Gastrocnemius medialis (tissue), 4 donors: ENCODE measurements at regions of chr19 and their contacts with region 1.

Region 1: DNA sequence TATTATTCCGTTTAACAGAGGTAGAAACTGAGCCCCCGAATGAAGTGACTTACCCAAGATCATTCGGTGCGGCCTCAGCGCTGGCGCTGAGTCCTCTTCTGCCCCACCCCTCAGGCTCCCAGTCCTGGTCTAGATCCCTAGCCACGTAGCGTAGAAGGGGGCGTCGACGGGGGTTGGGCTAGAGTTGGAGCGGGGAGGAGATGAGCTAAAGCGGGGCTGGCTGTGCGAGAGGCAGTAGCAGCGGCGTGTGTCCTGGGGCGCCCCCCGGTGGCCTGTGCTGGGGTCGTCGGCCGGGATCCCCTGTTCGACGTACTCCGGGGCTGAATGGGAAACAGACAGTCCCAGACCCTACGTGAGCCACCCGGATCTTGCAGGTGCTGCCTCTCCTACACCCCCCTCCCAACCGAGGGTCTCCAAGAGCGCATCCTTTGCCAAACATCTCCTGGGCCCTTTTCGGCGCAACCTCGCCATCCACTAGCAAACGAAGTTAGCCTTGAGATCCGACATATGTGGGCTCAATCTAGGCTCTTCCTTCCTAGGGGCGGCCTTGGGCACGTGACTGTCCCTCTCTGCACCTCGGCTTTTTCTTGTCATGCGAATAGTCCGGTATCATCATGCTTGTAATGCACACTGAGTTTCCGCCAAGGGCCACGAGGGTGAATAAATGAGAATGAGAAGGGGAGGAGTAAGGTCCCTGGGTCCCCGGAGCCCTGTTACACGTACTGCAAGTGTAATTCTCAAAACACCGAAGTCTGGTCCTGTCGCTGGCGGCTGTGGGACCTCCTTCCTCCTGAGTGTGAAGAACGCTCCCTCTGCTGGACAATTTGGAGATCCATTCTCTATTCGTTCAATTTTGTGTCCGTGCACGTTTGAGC is 47.7 kb downstream of the CYP4F22 start:
- DNase-seq: peak; percentile 76 to 80
- ATAC-seq: peak; percentile 87
- H3K4me3 ChIP-seq: peak overlapping the region; percentile 27 to 46 (median 40)
- H3K27ac ChIP-seq: peak overlapping the region in 3 of 4 donors; percentile 19 to 34 (median 25)
- H3K4me1 ChIP-seq: peaks cover 4 to 12% of the 10 kb centered on the region in 2 donors
- H3K27me3 ChIP-seq: peaks cover 12 to 25% (median 17%) of the 10 kb centered on the region in 3 donors
- CTCF ChIP-seq: peak; percentile 56 to 82 (median 74)
- POLR2A ChIP-seq: peak in 1 of 2 donors; percentile 37

Region 2: GRCh38 chr19:15081911-15082310 is 474.1 kb before region 1 on chr19 and contains the start of gene OR1I1:
- in situ Hi-C with region 1: loop called in 2 of 4 experiments (anchors 10 to 25 kb)
- intact Hi-C with region 1: no loop called
- DNase-seq: no peak
- ATAC-seq: no peak
- H3K4me3 ChIP-seq: no peak within 1 kb of the TSS
- H3K27ac ChIP-seq: no peak within 1 kb of the TSS
- H3K4me1 ChIP-seq: no peaks in the 10 kb centered on the region
- H3K27me3 ChIP-seq: peaks cover 10 to 16% (median 12%) of the 10 kb centered on the region in 3 donors
- CTCF ChIP-seq: no peak
- POLR2A ChIP-seq: no peak
- total RNA-seq, gene OR1I1: not detected

Region 3: GRCh38 chr19:15177269-15178116 is 378.5 kb before region 1 on chr19:
- in situ Hi-C with region 1: loop called (anchors 5 kb)
- intact Hi-C with region 1: loop called (anchors 1 kb)
- DNase-seq: peak; percentile 48 to 61
- ATAC-seq: peak; percentile 89
- H3K4me3 ChIP-seq: no peak overlapping the region
- H3K27ac ChIP-seq: peak overlapping the region in 2 of 4 donors; percentile 5 to 31
- H3K4me1 ChIP-seq: peaks cover 0 to 4% of the 10 kb centered on the region in 2 donors
- H3K27me3 ChIP-seq: peaks cover 0 to 9% (median 2%) of the 10 kb centered on the region in 3 donors
- CTCF ChIP-seq: peak; percentile 93 to 99 (median 99)
- POLR2A ChIP-seq: no peak

Region 4: GRCh38 chr19:15379083-15379995 is 176.7 kb before region 1 on chr19 and contains the start of gene AKAP8:
- in situ Hi-C with region 1: loop called (anchors 25 kb)
- intact Hi-C with region 1: loop called (anchors 5 kb)
- DNase-seq: peak; percentile 97 to 99
- ATAC-seq: peak; percentile 84 to 85
- H3K4me3 ChIP-seq: peak within 1 kb of the TSS; percentile 84 to 100 (median 88)
- H3K27ac ChIP-seq: peak within 1 kb of the TSS; percentile 92 to 99 (median 96)
- H3K4me1 ChIP-seq: peaks cover 38 to 39% of the 10 kb centered on the region in 2 donors
- H3K27me3 ChIP-seq: no peaks in the 10 kb centered on the region
- CTCF ChIP-seq: no peak
- POLR2A ChIP-seq: peak; percentile 67 to 78
- total RNA-seq, gene AKAP8: 26.0 to 41.5 (median 27.5) TPM

Region 5: DNA sequence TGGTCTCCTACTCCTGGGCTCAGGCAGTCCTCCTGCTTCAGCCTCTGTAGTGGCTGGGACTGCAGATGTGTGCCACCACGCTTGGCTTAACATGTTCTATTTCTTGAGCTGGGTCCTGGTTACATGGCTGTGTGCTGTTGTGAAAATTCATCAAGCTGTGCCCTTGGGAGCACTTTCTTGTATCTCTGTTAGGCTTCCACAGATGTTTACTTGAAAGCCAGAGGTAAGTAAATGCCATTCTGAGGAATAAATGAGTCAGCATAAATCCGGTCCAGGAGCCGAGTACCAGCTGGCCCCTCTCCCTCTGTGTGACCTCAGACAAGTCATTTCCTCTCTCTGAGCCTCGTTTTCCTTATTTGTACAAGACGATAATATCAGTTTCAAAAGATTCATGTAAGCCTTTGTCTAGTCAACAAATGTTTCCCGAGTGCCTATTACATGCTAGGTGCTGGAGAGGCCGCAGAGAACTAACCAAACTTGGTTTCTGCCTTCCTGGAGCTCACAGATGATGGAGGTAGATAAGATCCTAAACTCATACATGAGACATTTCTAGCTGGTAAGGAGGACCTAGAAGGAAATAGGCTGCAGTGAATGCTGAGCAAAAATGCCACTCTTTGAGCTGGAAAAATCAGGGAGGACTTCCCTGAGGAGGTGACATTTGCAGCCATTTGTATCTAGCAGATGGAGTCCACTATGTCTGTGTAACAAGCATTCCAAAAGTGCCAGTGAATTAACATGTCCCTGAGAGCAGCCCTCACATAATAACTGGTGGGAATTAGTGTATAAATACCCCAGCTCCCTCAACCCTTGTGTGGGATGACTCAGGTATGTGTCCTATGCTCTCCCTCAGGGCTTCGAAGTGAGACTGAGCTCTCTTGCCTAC is 88.9 kb before region 1 on chr19:
- in situ Hi-C with region 1: loop called in 3 of 4 experiments (anchors 10 to 25 kb)
- intact Hi-C with region 1: no loop called
- DNase-seq: no peak
- ATAC-seq: no peak
- H3K4me3 ChIP-seq: no peak overlapping the region
- H3K27ac ChIP-seq: no peak overlapping the region
- H3K4me1 ChIP-seq: no peaks in the 10 kb centered on the region
- H3K27me3 ChIP-seq: peaks cover 33 to 41% (median 39%) of the 10 kb centered on the region in 3 donors
- CTCF ChIP-seq: no peak
- POLR2A ChIP-seq: no peak

Region 6: GRCh38 chr19:15850385-15850784 is 294.4 kb after region 1 on chr19:
- in situ Hi-C with region 1: no loop called
- intact Hi-C with region 1: no loop called
- DNase-seq: no peak
- ATAC-seq: no peak
- H3K4me3 ChIP-seq: no peak overlapping the region
- H3K27ac ChIP-seq: no peak overlapping the region
- H3K4me1 ChIP-seq: no peaks in the 10 kb centered on the region
- H3K27me3 ChIP-seq: no peaks in the 10 kb centered on the region
- CTCF ChIP-seq: no peak
- POLR2A ChIP-seq: no peak